ENCODE measurements at regions of chr1 and their contacts with region 1.

Region 1: DNA sequence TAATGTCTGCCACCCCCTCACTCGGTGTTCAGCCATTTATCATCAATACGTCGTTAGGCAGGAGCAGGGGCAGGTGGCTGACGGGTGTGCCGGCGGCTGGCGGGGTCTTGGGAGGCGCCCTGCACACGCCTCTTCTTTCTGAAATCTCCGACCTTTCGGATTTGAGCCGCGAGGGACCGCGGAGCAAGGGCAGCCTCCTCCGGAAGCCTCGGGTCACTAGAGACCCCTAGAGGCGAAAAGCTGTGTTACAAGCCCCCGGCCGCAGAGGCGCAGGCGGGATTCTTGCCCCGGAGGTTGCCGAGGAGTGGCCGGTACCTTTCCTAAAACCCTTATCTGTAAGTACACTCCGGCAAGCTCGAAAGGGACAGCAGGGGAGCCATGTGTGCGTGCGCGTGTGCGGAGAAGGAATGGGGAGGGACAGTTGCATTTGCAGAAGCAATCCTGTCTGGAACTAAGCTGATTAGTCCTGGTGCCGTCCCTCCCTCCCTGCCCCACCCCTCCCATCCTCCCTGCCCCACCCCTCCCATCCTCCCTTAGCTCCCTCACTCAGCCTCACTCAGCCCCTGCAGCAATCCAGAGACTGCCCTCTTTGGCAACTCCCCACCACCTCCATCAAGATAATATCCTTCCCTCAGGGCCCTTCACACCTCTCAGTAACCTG is 11.0 kb downstream of the BRINP2 start:
- DNase-seq: no peak
- H3K4me3 ChIP-seq: peak overlapping the region; percentile 36
- CTCF ChIP-seq: peak; percentile 87

Region 2: GRCh38 chr1:176897350-176898236 is 284.2 kb before region 1 on chr1:
- CTCF ChIA-PET with region 1: interaction called, 24 read pairs
- POLR2A ChIA-PET with region 1: no interaction called
- DNase-seq: peak; percentile 7
- H3K4me3 ChIP-seq: no peak overlapping the region
- CTCF ChIP-seq: peak; percentile 89

Region 3: GRCh38 chr1:177170756-177171535 is 10.8 kb before region 1 on chr1 and contains the start of gene BRINP2:
- CTCF ChIA-PET with region 1: interaction called, 20 read pairs
- POLR2A ChIA-PET with region 1: no interaction called
- DNase-seq: no peak
- H3K4me3 ChIP-seq: peak within 1 kb of the TSS; percentile 43
- CTCF ChIP-seq: no peak

Region 4: DNA sequence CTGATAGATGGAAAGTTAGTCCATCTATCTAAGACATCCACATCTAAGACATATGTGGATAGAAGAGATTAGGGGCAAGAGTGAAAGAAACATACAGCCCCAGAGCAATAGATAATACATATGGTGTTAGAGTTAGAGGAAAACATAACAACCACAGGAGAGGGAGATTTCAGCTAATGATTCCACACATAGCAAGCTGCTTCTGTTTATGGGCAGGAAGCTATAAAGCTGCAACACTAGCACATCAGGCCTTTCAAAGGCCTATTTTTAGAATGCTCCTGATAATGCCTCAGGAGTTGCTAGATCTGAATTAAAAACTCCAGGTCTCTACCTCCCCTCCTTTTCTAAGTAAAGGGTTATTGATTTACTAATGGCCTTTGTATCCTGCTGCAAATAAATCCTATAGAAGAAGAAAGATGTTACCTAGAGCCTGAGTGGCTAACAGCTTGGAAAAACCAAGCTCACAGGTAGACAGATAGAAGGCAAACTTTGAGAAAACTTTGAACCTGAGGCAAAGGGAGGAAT is 25.1 kb after region 1 on chr1:
- CTCF ChIA-PET with region 1: interaction called, 11 read pairs
- POLR2A ChIA-PET with region 1: interaction called, 3 read pairs
- DNase-seq: peak; percentile 44
- H3K4me3 ChIP-seq: no peak overlapping the region
- CTCF ChIP-seq: no peak

Measured in AG04449 (cell line).